ENCODE measurements at regions of chr11 and their contacts with region 1.

Region 1: DNA sequence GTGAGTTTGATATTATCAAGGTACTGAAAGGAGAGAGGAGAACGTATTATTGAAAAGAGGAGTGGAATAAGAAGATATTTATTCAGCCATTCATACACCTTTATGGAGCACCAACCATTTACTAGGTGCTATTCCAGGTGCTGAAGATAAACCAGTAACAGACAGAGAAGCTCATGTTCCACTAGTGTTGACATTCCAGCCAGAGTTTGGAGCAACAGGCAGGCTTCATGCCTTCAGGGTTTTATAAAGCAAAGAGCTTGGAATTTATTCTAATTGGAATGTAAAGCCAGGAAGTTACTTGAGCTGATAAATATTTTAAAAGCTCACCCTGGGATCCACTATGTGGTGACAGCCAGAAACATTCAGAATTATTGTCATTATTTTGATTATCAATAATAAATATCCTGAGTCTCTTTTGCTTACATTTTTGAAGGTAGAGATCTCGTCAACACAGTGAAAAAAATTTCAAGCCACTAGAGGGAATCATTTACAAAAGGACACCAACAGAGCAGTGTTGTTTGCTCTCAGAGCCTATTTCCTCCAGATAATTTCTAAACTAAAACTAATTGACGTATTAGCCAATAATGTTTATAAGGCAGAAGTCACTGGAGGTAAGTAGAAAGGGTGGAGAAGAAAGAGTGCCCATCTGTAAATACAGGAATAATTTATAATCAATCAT is 172.0 kb downstream of the KCNA4 start:
- DNase-seq: no peak
- ATAC-seq: peak in 2 of 4 donors; percentile 47
- H3K4me3 ChIP-seq: no peak overlapping the region
- H3K27ac ChIP-seq: no peak overlapping the region
- H3K4me1 ChIP-seq: no peaks in the 10 kb centered on the region
- H3K27me3 ChIP-seq: no peaks in the 10 kb centered on the region
- CTCF ChIP-seq: peak in 9 of 12 donors; percentile 10 to 47 (median 29)
- POLR2A ChIP-seq: no peak

Region 2: DNA sequence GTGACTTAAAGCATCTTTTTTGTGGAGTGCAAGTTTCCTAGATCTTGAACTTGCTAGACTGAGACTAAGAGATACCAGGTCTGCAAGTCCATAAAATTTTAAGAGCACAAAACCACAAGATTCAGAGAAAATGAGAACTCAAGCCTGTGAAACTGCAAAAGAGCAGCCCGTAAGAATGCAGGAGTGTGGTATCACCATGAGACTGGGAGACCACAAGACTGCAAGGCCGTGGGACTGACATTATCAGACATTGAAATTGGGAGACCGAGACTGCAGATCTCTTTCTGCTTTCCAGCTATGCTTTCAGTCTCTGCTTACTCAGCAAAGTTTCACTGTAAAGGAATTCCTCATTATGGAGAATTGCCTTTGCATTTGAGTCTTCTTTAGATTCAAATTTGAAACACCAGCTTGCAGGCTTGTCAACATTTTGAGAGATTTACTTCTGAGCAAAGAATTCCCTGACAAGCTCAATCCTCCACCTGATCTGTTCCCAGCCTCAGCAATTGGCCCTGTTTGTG is 449.2 kb before region 1 on chr11:
- intact Hi-C with region 1: no loop called
- DNase-seq: no peak
- ATAC-seq: no peak
- H3K4me3 ChIP-seq: no peak overlapping the region
- H3K27ac ChIP-seq: no peak overlapping the region
- H3K4me1 ChIP-seq: no peaks in the 10 kb centered on the region
- H3K27me3 ChIP-seq: no peaks in the 10 kb centered on the region
- CTCF ChIP-seq: no peak
- POLR2A ChIP-seq: no peak

Region 3: GRCh38 chr11:29679996-29680395 is 164.8 kb before region 1 on chr11:
- intact Hi-C with region 1: no loop called
- DNase-seq: no peak
- ATAC-seq: no peak
- H3K4me3 ChIP-seq: no peak overlapping the region
- H3K27ac ChIP-seq: no peak overlapping the region
- H3K4me1 ChIP-seq: no peaks in the 10 kb centered on the region
- H3K27me3 ChIP-seq: no peaks in the 10 kb centered on the region
- CTCF ChIP-seq: no peak
- POLR2A ChIP-seq: no peak

Region 4: DNA sequence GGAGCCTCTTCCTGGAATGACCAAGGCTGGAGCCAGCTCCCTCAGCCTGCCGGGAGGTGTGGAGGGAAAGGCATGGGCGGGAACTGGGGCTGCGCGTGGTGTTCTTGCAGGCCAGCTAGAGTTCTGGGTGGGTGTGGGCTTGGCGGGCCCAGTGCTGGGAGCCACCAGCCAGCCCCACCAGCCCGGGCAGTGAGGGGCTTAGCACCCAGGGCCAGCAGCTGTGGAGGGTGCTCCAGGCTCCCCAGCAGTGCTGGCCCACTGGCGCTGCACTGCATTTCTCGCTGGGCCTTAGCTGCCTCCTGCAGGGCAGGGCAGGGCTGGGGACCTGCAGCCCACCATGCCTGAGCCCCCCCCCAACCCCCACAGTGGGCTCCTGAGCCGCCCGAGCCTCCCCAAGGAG is 132.3 kb before region 1 on chr11:
- intact Hi-C with region 1: no loop called
- DNase-seq: peak in 1 of 5 donors; percentile 47
- ATAC-seq: peak in 1 of 4 donors; percentile 34
- H3K4me3 ChIP-seq: no peak overlapping the region
- H3K27ac ChIP-seq: no peak overlapping the region
- H3K4me1 ChIP-seq: peaks cover 0 to 6% (median 0%) of the 10 kb centered on the region in 12 donors
- H3K27me3 ChIP-seq: no peaks in the 10 kb centered on the region
- CTCF ChIP-seq: no peak
- POLR2A ChIP-seq: no peak

Region 5: GRCh38 chr11:30025396-30026139 is 180.7 kb after region 1 on chr11:
- intact Hi-C with region 1: loop called in 1 of 10 experiments (anchors 5 kb)
- DNase-seq: no peak
- ATAC-seq: no peak
- H3K4me3 ChIP-seq: no peak overlapping the region
- H3K27ac ChIP-seq: no peak overlapping the region
- H3K4me1 ChIP-seq: no peaks in the 10 kb centered on the region
- H3K27me3 ChIP-seq: no peaks in the 10 kb centered on the region
- CTCF ChIP-seq: no peak
- POLR2A ChIP-seq: no peak

Region 6: GRCh38 chr11:30046582-30046952 is 201.7 kb after region 1 on chr11:
- intact Hi-C with region 1: loop called in 4 of 10 experiments (anchors 2 to 10 kb)
- DNase-seq: no peak
- ATAC-seq: no peak
- H3K4me3 ChIP-seq: no peak overlapping the region
- H3K27ac ChIP-seq: no peak overlapping the region
- H3K4me1 ChIP-seq: peaks cover 0 to 8% (median 0%) of the 10 kb centered on the region in 12 donors
- H3K27me3 ChIP-seq: no peaks in the 10 kb centered on the region
- CTCF ChIP-seq: no peak
- POLR2A ChIP-seq: no peak

Measured in heart left ventricle (tissue), 16 donors.